ENCODE measurements at regions of chr2 and their contacts with region 1.

Region 1: DNA sequence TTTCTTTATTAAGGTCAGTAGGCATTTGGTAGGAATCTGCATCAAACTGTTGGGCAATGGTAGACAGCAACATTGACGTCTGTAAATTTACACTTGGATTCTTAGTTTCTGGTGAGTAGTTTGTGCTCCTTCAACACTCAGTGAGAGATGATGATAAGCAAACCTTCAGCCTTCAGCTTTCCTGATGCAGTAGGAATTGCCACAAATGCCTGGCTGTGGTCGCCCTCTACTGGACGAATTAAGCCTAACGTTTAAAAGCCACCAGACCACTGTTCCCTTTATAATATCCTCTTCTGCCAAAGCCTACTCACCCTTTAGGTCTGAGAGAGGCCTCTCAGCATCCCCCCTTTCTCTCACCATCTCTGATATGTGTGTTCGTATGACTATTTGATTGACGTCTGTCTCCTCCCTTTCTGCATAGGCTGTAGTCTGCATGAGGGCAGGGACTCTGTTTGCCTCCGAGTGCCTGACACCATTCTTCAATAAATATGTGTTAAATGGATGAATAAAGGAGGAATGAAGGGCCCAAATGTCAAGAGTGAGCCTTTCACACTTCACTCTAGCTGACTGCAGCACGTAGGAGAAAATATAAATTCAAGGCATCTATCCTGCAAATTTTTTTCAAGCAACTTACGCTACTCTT is 47.0 kb upstream of the PLEKHM3 start:
- DNase-seq: peak; percentile 15 to 62 (median 38)
- ATAC-seq: peak; percentile 78
- H3K4me3 ChIP-seq: no peak overlapping the region
- H3K4me3 Mint-ChIP-seq: no peak overlapping the region
- H3K27ac ChIP-seq: no peak overlapping the region
- H3K27ac Mint-ChIP-seq: no peak overlapping the region
- H3K4me1 ChIP-seq: no peaks in the 10 kb centered on the region
- H3K4me1 Mint-ChIP-seq: no peaks in the 10 kb centered on the region
- H3K27me3 ChIP-seq: peaks cover 0 to 3% of the 10 kb centered on the region in 2 donors
- H3K27me3 Mint-ChIP-seq: peaks cover 5 to 17% (median 10%) of the 10 kb centered on the region in 5 donors

Region 2: DNA sequence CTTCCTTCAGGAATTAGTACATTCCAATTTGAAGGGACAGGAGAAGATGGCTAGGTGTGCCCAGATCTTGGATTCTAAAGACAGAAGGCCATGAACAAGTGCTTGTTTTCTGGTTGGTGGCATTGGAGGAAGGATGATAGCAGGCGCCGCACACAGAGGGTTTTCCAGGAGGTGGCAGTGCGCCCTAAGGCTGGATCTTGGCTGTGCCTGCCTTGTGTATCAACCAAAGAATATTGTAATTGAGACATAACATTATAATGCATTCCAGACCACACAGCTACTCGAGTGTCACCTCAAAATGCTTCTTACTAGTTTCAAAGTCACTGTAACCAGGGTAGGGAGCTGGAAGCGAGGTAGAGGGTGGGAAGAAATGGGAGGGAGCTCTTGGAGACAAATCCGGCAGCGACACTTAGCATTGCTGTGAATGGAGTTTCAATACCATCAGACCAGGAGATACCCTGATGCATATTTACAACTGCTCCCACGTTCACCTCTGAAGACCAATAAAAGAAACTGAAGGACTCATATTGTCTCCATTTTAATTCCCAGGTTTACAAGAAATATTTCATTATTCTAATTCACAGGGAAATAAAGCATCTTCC is 1090.5 kb before region 1 on chr2:
- CTCF ChIA-PET with region 1: no interaction called
- POLR2A ChIA-PET with region 1: no interaction called
- intact Hi-C with region 1: loop called in 1 of 2 experiments (anchors 1 kb)
- DNase-seq: peak; percentile 12 to 61 (median 39)
- ATAC-seq: peak; percentile 67
- H3K4me3 ChIP-seq: no peak overlapping the region
- H3K4me3 Mint-ChIP-seq: no peak overlapping the region
- H3K27ac ChIP-seq: no peak overlapping the region
- H3K27ac Mint-ChIP-seq: peak overlapping the region in 2 of 9 donors; percentile 46 to 63
- H3K4me1 ChIP-seq: peaks cover 0 to 7% of the 10 kb centered on the region in 2 donors
- H3K4me1 Mint-ChIP-seq: peaks cover 0 to 25% (median 11%) of the 10 kb centered on the region in 7 donors
- H3K27me3 ChIP-seq: no peaks in the 10 kb centered on the region
- H3K27me3 Mint-ChIP-seq: peaks cover 0 to 6% (median 0%) of the 10 kb centered on the region in 5 donors

Region 3: DNA sequence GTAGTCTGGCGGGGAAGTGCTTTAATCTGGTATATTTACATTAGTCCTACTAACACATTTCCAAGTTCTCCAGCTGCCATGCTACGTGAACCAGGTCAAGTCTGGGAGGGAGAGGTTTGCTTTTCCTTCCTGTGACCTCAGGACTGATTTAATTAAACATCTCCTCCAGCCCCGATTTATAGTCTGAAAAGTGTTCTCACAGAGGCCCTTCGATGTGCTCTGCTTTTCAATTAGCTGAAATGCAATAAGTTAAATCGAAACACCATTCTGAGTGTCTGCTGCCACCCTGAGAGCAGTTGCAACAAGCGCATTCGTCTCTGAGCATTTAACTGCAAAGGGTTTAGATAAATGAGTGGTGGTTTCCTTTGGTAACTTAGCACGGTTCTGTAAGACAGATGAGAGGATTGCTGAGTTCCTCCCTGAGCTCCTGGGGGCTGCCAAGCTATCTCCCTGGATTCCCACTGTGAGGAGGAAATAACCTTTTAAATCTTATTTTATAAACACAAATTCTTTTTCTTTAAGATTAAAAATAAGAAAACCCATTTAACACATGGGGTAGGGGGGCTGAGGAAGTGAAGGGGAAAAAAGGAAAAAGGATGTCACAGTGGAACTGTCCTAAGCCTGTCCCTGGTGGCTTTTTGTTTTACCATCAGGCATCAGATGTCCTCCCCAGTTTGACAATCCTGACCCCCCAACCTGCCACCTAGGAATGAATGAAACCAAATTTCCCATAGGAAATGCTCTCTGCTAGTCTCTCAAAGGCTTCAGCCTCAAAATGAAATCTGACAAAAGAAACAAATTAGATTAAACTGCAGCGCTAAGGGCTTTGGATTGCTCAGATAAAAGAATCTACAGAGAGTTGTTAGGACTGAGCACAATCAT is 599.1 kb before region 1 on chr2:
- CTCF ChIA-PET with region 1: no interaction called
- POLR2A ChIA-PET with region 1: no interaction called
- intact Hi-C with region 1: loop called in 1 of 2 experiments (anchors 2 kb)
- DNase-seq: peak in 8 of 9 donors; percentile 25 to 68 (median 52)
- ATAC-seq: peak; percentile 76
- H3K4me3 ChIP-seq: no peak overlapping the region
- H3K4me3 Mint-ChIP-seq: peak overlapping the region in 4 of 10 donors; percentile 20 to 52 (median 42)
- H3K27ac ChIP-seq: no peak overlapping the region
- H3K27ac Mint-ChIP-seq: peak overlapping the region in 7 of 9 donors; percentile 14 to 71 (median 48)
- H3K4me1 ChIP-seq: no peaks in the 10 kb centered on the region
- H3K4me1 Mint-ChIP-seq: peaks cover 6 to 23% (median 18%) of the 10 kb centered on the region in 7 donors
- H3K27me3 ChIP-seq: no peaks in the 10 kb centered on the region
- H3K27me3 Mint-ChIP-seq: peaks cover 0 to 4% (median 0%) of the 10 kb centered on the region in 5 donors

Region 4: GRCh38 chr2:207513551-207514257 is 558.7 kb before region 1 on chr2:
- CTCF ChIA-PET with region 1: interaction called, 3 read pairs
- POLR2A ChIA-PET with region 1: no interaction called
- intact Hi-C with region 1: loop called in 1 of 2 experiments (anchors 1 kb)
- DNase-seq: no peak
- ATAC-seq: no peak
- H3K4me3 ChIP-seq: no peak overlapping the region
- H3K4me3 Mint-ChIP-seq: no peak overlapping the region
- H3K27ac ChIP-seq: no peak overlapping the region
- H3K27ac Mint-ChIP-seq: peak overlapping the region in 1 of 9 donors; percentile 39
- H3K4me1 ChIP-seq: no peaks in the 10 kb centered on the region
- H3K4me1 Mint-ChIP-seq: peaks cover 0 to 20% (median 6%) of the 10 kb centered on the region in 7 donors
- H3K27me3 ChIP-seq: no peaks in the 10 kb centered on the region
- H3K27me3 Mint-ChIP-seq: peaks cover 0 to 11% (median 0%) of the 10 kb centered on the region in 5 donors

Region 5: DNA sequence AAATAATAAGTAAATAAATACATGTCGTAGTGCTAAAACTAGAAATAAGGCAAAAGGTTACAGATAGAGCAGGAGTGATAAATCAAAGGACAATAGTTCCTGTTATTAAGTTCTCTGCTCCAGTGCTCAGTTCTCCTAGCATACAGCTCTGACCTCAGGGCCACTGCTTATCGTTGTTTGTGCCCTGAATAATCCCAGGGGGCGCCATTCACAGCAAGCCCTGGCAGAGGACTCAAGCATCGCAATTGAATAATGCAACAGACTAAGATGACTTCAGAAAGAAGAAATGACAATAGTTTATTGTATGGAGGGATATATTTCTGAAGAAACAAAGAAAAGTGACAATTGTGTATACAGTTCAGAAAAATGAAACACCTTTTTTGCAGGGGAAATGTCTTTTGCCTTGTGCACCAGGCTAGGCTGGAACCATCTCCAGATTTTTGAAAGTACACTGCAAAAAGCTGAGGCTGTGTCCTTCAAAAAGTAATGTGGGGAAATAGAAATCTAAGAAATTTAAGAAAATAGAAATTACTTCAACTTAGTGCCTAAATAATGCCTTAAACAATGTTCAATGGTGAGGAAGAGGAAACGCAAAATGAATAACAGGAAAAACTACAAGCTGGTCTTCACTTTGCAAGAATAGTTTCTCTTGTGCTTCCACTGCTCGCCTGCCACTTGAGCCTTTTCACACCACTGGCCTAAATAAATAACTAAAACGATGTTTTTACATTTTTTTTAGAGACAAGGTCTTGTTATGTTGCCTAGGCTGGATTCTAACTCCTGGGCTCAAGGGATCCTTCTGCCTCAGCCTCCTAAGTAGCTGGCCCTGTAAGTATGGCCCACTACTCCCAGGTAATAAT is 379.9 kb before region 1 on chr2:
- CTCF ChIA-PET with region 1: no interaction called
- POLR2A ChIA-PET with region 1: no interaction called
- intact Hi-C with region 1: loop called in 1 of 2 experiments (anchors 1 kb)
- DNase-seq: peak in 8 of 9 donors; percentile 21 to 58 (median 41)
- ATAC-seq: peak; percentile 82
- H3K4me3 ChIP-seq: no peak overlapping the region
- H3K4me3 Mint-ChIP-seq: peak overlapping the region in 2 of 10 donors; percentile 35 to 56
- H3K27ac ChIP-seq: no peak overlapping the region
- H3K27ac Mint-ChIP-seq: no peak overlapping the region
- H3K4me1 ChIP-seq: no peaks in the 10 kb centered on the region
- H3K4me1 Mint-ChIP-seq: peaks cover 0 to 6% (median 5%) of the 10 kb centered on the region in 7 donors
- H3K27me3 ChIP-seq: no peaks in the 10 kb centered on the region
- H3K27me3 Mint-ChIP-seq: peaks cover 0 to 5% (median 0%) of the 10 kb centered on the region in 5 donors

Region 6: DNA sequence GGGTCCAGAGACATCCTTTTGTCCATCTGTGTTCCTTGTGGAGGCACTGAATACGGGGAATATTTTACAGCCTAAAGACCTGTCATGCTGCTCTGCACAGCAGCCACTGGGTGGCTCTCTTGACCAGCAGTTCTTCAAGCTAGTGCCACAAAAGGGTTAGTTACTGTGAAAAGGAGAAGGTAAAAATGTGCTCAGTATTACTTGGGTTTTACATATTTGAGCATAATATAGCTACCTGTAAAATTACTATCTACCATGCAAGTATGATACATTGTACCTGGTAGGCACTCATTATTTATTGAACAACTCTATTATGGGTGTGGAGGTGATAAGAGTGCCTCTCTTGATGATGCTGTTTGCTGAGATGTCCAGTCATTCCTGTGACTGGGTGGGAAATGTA is 326.2 kb before region 1 on chr2:
- CTCF ChIA-PET with region 1: interaction called, 4 read pairs
- POLR2A ChIA-PET with region 1: interaction called, 3 read pairs
- intact Hi-C with region 1: loop called (anchors 1 kb)
- DNase-seq: peak in 7 of 9 donors; percentile 17 to 50 (median 34)
- ATAC-seq: peak; percentile 85
- H3K4me3 ChIP-seq: no peak overlapping the region
- H3K4me3 Mint-ChIP-seq: no peak overlapping the region
- H3K27ac ChIP-seq: no peak overlapping the region
- H3K27ac Mint-ChIP-seq: peak overlapping the region in 1 of 9 donors; percentile 20
- H3K4me1 ChIP-seq: no peaks in the 10 kb centered on the region
- H3K4me1 Mint-ChIP-seq: no peaks in the 10 kb centered on the region
- H3K27me3 ChIP-seq: no peaks in the 10 kb centered on the region
- H3K27me3 Mint-ChIP-seq: no peaks in the 10 kb centered on the region